ENCODE measurements at regions of chr2 and their contacts with region 1.

Region 1: GRCh38 chr2:156892467-156893281 is 364.8 kb upstream of the GALNT5 start:
- DNase-seq: peak; percentile 86
- H3K4me3 ChIP-seq: peak overlapping the region; percentile 38 to 45 (median 42)
- H3K27ac ChIP-seq: no peak overlapping the region
- H3K4me1 ChIP-seq: peaks cover 23% of the 10 kb centered on the region
- H3K27me3 ChIP-seq: no peaks in the 10 kb centered on the region
- CTCF ChIP-seq: peak; percentile 67 to 69

Region 2: GRCh38 chr2:155913356-155913755 is 979.3 kb before region 1 on chr2:
- CTCF ChIA-PET with region 1: no interaction called
- dilution Hi-C with region 1: no loop called
- in situ Hi-C with region 1: no loop called
- intact Hi-C with region 1: no loop called
- DNase-seq: no peak
- H3K4me3 ChIP-seq: no peak overlapping the region
- H3K27ac ChIP-seq: no peak overlapping the region
- H3K4me1 ChIP-seq: no peaks in the 10 kb centered on the region
- H3K27me3 ChIP-seq: peaks cover 2% of the 10 kb centered on the region
- CTCF ChIP-seq: no peak

Region 3: GRCh38 chr2:156192468-156192867 is 700.2 kb before region 1 on chr2:
- CTCF ChIA-PET with region 1: no interaction called
- dilution Hi-C with region 1: no loop called
- in situ Hi-C with region 1: no loop called
- intact Hi-C with region 1: loop called (anchors 2 kb)
- DNase-seq: no peak
- H3K4me3 ChIP-seq: no peak overlapping the region
- H3K27ac ChIP-seq: no peak overlapping the region
- H3K4me1 ChIP-seq: no peaks in the 10 kb centered on the region
- H3K27me3 ChIP-seq: no peaks in the 10 kb centered on the region
- CTCF ChIP-seq: peak in 1 of 2 donors; percentile 39

Region 4: GRCh38 chr2:156341452-156342253 is 551.0 kb before region 1 on chr2:
- CTCF ChIA-PET with region 1: no interaction called
- dilution Hi-C with region 1: no loop called
- in situ Hi-C with region 1: loop called in 1 of 2 experiments (anchors 25 kb)
- intact Hi-C with region 1: no loop called
- DNase-seq: peak; percentile 94
- H3K4me3 ChIP-seq: peak overlapping the region; percentile 73 to 97 (median 96)
- H3K27ac ChIP-seq: peak overlapping the region; percentile 97
- H3K4me1 ChIP-seq: peaks cover 24% of the 10 kb centered on the region
- H3K27me3 ChIP-seq: no peaks in the 10 kb centered on the region
- CTCF ChIP-seq: no peak

Region 5: DNA sequence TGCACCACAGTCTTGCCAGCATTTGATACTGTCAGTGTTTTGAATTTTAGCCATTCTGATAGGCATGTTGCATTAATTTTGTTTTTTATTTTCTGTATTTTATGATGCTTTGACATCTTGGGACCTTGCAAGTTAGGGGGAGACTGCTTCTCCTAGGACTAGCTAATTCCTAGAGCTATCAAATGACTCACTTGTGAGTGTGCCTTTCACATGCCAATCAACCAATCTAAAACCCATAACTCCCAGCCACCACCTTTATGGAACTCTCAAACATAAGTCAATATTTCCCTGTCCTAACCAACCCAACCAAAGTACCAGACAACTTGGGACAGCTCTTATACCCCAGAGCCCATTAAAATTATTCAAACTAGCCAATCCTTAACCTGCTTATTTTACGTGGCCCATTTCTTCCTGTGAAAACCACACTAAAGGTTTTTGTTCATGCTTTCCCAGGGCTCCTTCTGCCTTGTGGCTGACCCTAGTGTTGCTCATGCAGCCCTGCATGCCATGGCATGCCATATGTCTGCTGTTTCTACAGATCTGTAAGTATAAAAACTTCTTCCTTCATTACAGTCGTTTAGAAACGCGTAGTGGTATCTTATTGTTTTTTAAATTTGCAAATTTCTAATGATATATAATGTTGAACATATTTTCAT is 226.4 kb before region 1 on chr2:
- CTCF ChIA-PET with region 1: no interaction called
- dilution Hi-C with region 1: no loop called
- in situ Hi-C with region 1: no loop called
- intact Hi-C with region 1: loop called (anchors 2 kb)
- DNase-seq: peak; percentile 92
- H3K4me3 ChIP-seq: peak overlapping the region in 2 of 3 experiments; percentile 32 to 55
- H3K27ac ChIP-seq: peak overlapping the region; percentile 56
- H3K4me1 ChIP-seq: peaks cover 10% of the 10 kb centered on the region
- H3K27me3 ChIP-seq: no peaks in the 10 kb centered on the region
- CTCF ChIP-seq: peak in 1 of 2 donors; percentile 26

Region 6: GRCh38 chr2:156845806-156846558 is 46.7 kb before region 1 on chr2:
- CTCF ChIA-PET with region 1: no interaction called
- dilution Hi-C with region 1: no loop called
- in situ Hi-C with region 1: no loop called
- intact Hi-C with region 1: no loop called
- DNase-seq: peak; percentile 58
- H3K4me3 ChIP-seq: no peak overlapping the region
- H3K27ac ChIP-seq: no peak overlapping the region
- H3K4me1 ChIP-seq: no peaks in the 10 kb centered on the region
- H3K27me3 ChIP-seq: no peaks in the 10 kb centered on the region
- CTCF ChIP-seq: no peak

Region 7: GRCh38 chr2:157194097-157194688 is 301.5 kb after region 1 on chr2:
- CTCF ChIA-PET with region 1: no interaction called
- dilution Hi-C with region 1: no loop called
- in situ Hi-C with region 1: loop called in 1 of 2 experiments (anchors 25 kb)
- intact Hi-C with region 1: loop called (anchors 1 kb)
- DNase-seq: peak; percentile 49
- H3K4me3 ChIP-seq: no peak overlapping the region
- H3K27ac ChIP-seq: no peak overlapping the region
- H3K4me1 ChIP-seq: no peaks in the 10 kb centered on the region
- H3K27me3 ChIP-seq: no peaks in the 10 kb centered on the region
- CTCF ChIP-seq: peak; percentile 75 to 84

Measured in mammary epithelial cell (primary cell).